ENCODE measurements at regions of chr7 and their contacts with region 1.

Region 1: DNA sequence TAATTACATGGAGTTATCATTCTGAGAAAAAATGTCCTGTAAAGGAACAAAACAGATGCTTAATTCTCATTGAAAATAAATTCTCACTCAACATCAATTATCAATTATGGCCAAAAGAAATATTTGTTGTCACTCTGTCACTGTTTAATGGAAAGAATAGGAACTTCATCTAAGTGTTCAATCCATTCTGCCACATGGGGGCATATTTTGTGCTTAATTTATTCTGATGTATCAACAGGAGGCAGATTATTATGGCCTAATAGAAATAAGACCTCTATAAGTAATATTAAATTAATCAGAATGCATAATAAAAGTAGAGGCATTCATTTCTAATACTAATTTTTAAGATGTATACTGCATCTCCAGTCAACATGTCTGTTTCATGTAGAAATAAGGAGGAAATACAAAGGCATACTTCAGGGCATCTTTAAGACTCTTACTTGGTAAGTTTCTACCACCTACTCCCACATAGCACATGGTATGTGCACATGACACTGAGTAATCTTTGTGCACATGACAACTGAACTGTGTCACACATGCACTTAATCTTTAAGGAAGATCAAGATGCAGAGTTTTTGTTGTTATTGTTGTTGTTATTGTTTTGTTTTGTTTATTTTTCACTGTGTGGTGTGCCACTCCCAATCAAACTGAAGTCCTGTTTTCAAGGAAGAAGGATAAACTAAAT is 420.4 kb upstream of the SEMA3A start:
- DNase-seq: no peak
- ATAC-seq: peak; percentile 31; the same call in 1 of the 3 replicates
- H3K4me3 ChIP-seq: no peak overlapping the region
- H3K27ac ChIP-seq: no peak overlapping the region
- H3K4me1 ChIP-seq: no peaks in the 10 kb centered on the region
- H3K27me3 ChIP-seq: no peaks in the 10 kb centered on the region
- CTCF ChIP-seq: no peak
- EP300 ChIP-seq: no peak
- POLR2A ChIP-seq: no peak
- RAD21 ChIP-seq: no peak

Region 2: DNA sequence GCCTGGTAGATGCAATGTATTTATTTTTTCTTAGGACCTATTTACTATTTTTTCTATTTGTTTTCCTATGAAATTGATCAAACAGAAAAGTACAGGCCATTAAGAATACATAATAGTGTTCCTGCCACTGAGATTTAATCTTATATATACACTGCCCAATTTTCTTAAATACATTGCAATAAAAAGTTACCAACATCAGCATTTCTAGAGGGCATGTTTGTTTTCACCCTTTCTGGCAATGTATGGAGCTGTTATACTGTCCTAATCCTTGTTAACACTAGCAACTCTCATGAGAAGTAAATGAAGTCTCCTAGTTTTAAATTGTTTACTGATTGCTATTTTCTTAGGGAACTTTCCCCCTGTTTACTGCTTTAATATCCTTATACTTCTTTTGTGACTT is 61.3 kb before region 1 on chr7:
- CTCF ChIA-PET with region 1: no interaction called
- POLR2A ChIA-PET with region 1: no interaction called
- RAD21 ChIA-PET with region 1: no interaction called
- SMC1A ChIA-PET with region 1: no interaction called
- in situ Hi-C with region 1: no loop called
- intact Hi-C with region 1: loop called (anchors 10 kb)
- DNase-seq: no peak
- ATAC-seq: no peak
- H3K4me3 ChIP-seq: no peak overlapping the region
- H3K27ac ChIP-seq: no peak overlapping the region
- H3K4me1 ChIP-seq: no peaks in the 10 kb centered on the region
- H3K27me3 ChIP-seq: no peaks in the 10 kb centered on the region
- CTCF ChIP-seq: no peak
- EP300 ChIP-seq: no peak
- POLR2A ChIP-seq: no peak
- RAD21 ChIP-seq: no peak